ENCODE measurements at regions of chr4 and their contacts with region 1.

Region 1: GRCh38 chr4:4480685-4481398 is 61.0 kb downstream of the STX18 start:
- DNase-seq: no peak
- H3K4me3 ChIP-seq: no peak overlapping the region
- H3K27ac ChIP-seq: no peak overlapping the region
- H3K27me3 ChIP-seq: no peaks in the 10 kb centered on the region
- CTCF ChIP-seq: peak; percentile 71

Region 2: GRCh38 chr4:4386736-4387392 is 94.0 kb before region 1 on chr4 and contains the start of gene NSG1:
- CTCF ChIA-PET with region 1: no interaction called
- POLR2A ChIA-PET with region 1: no interaction called
- DNase-seq: no peak
- H3K4me3 ChIP-seq: peak within 1 kb of the TSS; percentile 50
- H3K27ac ChIP-seq: no peak within 1 kb of the TSS
- H3K27me3 ChIP-seq: peaks cover 72% of the 10 kb centered on the region
- CTCF ChIP-seq: no peak
- polyA plus RNA-seq, gene NSG1: 10.4 and 14.7 TPM in 2 replicates

Region 3: DNA sequence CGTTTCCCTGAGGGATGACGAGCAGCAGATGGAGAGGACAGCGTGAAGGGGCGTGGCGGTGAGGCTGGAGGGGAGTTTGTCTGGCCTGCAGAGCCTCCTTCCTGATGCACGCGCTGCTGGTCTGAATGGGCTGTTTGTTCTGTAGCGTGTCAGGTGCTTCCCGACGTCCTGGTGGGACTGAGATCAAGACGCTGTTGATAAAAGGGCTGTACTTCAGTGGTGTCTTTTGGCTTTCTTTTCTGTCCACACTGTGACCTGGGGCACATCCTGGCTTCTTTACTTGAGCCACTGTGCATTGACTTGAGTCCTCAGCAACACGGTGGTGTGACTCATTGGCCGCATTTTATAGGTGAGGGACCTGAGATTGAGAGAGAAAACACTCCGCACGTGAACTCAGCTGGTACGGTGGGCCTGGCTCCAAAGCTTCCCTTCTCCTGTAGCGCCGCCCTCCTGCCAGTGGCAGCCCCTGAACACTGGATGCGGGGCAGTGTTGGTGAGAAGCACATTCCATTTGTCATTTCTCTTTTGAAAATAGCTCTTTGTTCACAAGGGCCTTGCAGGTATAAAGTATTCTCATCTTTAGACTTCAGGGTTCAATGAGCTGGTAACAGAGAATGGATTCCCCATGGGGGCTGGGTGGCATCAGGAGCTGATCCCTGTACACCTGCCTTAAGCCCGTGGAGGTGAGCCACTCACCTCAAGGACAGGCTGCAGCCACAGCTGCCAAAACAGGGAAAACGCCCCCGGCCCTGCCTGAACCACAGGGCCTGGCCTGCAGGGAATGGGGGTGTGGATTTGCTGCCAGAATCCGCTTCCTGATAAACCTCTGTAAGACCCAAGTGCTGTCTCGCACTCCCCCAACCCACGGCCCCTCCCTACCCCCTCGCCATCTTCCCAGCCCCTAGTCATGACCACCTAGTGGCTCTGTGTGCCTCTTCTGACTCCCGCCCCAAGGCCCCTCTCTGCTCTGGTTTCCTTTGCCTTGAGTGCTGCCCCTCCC is 64.7 kb before region 1 on chr4:
- CTCF ChIA-PET with region 1: no interaction called
- POLR2A ChIA-PET with region 1: no interaction called
- DNase-seq: no peak
- H3K4me3 ChIP-seq: no peak overlapping the region
- H3K27ac ChIP-seq: no peak overlapping the region
- H3K27me3 ChIP-seq: no peaks in the 10 kb centered on the region
- CTCF ChIP-seq: no peak

Region 4: DNA sequence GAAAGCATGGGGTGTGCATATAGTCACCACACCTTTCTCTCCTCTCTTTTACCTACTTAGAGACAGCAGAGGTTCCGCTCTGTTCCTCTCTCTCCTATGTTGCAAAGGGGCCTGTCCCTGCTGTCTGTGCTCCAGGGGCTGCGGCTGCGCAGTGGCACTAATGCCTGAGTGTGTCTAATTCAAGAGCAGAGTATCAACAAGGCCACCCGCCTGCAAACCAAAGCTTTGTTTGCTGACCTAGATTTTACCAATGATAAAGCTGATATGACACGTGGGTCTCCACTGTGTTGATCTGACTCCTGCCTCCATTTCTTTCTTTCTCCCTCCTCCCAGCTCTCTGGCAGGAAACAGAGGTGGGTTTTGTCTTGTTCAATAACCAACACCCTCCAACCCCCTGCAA is 19.0 kb before region 1 on chr4:
- CTCF ChIA-PET with region 1: interaction called, 11 read pairs
- POLR2A ChIA-PET with region 1: no interaction called
- DNase-seq: no peak
- H3K4me3 ChIP-seq: no peak overlapping the region
- H3K27ac ChIP-seq: no peak overlapping the region
- H3K27me3 ChIP-seq: no peaks in the 10 kb centered on the region
- CTCF ChIP-seq: no peak

Measured in AG04450 (cell line).